Gastrocnemius medialis (tissue), 4 donors: ENCODE measurements at regions of chr2 and their contacts with region 1.

Region 1: DNA sequence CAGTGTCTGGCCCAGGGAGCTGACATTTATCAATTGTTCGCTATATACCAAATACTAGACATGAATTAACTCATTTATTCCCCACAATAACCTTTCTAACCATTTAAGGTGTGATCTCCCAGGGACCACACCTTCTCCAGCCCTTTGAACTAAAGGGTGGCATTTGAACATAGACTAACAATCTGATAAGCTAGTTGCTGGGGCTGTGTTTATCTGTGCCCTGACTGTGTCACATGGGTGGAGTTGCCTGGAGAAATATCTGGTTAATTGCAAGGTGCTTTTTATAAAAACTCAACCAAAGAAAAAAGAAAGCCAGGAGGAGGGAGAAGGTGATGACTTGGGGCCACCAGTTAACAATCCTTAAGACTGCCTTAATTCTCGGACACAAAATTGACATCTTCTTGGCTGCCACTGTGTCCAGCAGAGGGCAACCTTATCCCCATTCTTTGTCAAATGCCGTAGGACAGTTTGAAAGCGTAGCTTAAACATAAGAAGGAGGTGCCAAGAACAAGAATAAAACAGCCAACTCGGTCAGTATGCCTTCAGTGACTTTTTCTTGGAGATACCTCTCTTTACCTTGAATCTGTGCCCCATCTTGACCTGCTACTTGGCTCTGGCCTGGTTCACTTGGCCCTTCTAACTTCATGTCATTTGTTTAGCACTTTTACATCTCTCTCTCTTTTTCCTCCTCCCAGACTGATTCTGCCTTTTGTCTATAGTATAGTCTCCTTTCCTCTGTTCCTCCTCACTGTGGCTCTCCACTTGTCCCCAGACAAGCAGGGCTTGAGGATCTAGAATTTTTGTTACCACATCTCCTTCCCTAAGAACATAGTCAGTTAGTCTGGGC is 183.4 kb downstream of the MYO3B start:
- DNase-seq: peak in 1 of 2 donors; percentile 6
- ATAC-seq: peak; percentile 47 to 53
- H3K4me3 ChIP-seq: no peak overlapping the region
- H3K27ac ChIP-seq: no peak overlapping the region
- H3K4me1 ChIP-seq: no peaks in the 10 kb centered on the region
- H3K27me3 ChIP-seq: peaks cover 0 to 3% (median 0%) of the 10 kb centered on the region in 3 donors
- CTCF ChIP-seq: peak in 4 of 5 experiments; percentile 10 to 60 (median 46)
- POLR2A ChIP-seq: no peak

Region 2: DNA sequence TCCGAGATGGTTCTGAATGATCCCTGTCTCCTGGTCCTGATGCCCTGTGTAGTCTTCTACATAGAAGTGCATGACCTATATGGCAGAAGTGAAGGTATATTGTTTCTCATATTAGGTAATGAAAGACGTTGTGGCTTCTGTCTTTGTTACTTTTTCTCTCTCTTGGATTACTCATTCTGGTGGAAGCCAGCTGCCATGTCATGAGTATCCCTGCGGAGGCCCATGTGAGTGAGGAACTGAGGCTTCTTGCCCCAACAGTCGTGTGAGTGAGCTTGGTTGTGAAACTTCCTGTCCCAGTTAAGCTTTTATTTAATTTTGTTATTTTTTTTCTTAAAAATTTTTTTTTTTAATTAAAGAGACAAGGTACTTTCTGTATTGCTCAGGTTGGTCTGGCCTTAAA is 399.4 kb before region 1 on chr2:
- in situ Hi-C with region 1: no loop called
- intact Hi-C with region 1: no loop called
- DNase-seq: peak; percentile 31 to 45
- ATAC-seq: peak; percentile 41 to 78
- H3K4me3 ChIP-seq: no peak overlapping the region
- H3K27ac ChIP-seq: peak overlapping the region in 1 of 4 donors; percentile 38
- H3K4me1 ChIP-seq: peaks cover 8 to 11% of the 10 kb centered on the region in 2 donors
- H3K27me3 ChIP-seq: no peaks in the 10 kb centered on the region
- CTCF ChIP-seq: no peak
- POLR2A ChIP-seq: no peak

Region 3: DNA sequence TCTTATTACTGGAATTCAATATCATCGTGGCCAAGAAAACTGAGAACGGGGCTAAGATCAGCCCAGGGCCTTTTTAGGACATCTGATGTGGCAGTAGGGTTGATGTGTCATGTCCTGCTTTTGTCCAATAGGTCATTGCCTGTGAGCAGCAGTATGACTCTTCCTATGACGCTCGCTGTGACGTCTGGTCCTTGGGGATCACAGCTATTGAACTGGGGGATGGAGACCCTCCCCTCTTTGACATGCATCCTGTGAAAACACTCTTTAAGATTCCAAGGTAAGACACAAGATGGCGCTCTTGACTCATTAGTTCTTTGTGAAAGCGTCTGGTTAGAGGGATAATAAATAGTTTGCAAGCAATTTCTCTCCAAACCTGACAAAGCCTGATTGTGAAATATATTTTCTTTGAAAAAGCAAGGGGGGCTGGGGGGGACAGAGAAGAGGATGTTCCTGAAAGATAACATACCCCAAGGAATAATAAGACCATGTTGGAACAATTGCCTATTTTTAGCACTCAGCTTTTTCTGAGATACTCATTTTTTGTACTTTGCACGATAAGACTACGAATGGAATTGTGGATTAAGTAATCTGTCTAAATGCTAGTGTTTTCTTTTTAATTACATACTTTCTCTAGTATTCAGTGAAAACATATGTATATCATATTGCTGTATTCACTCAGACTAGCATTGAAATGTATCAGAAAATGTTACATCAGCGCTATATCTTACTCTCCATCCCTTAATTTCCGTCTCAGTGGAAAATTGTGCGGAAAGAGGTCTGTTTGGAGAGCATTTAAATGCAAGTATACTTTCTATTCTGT is 125.2 kb before region 1 on chr2:
- in situ Hi-C with region 1: no loop called
- intact Hi-C with region 1: loop called (anchors 10 kb)
- DNase-seq: no peak
- ATAC-seq: peak in 1 of 2 donors; percentile 54
- H3K4me3 ChIP-seq: no peak overlapping the region
- H3K27ac ChIP-seq: no peak overlapping the region
- H3K4me1 ChIP-seq: no peaks in the 10 kb centered on the region
- H3K27me3 ChIP-seq: peaks cover 0 to 5% (median 3%) of the 10 kb centered on the region in 3 donors
- CTCF ChIP-seq: peak in 3 of 5 experiments; percentile 50 to 55 (median 52)
- POLR2A ChIP-seq: no peak

Region 4: GRCh38 chr2:170965446-170966225 is 604.3 kb after region 1 on chr2:
- in situ Hi-C with region 1: no loop called
- intact Hi-C with region 1: no loop called
- DNase-seq: no peak
- ATAC-seq: no peak
- H3K4me3 ChIP-seq: no peak overlapping the region
- H3K27ac ChIP-seq: no peak overlapping the region
- H3K4me1 ChIP-seq: no peaks in the 10 kb centered on the region
- H3K27me3 ChIP-seq: no peaks in the 10 kb centered on the region
- CTCF ChIP-seq: no peak
- POLR2A ChIP-seq: no peak